OCI-LY7 (cell line): ENCODE measurements at regions of chr1 and their contacts with region 1.

Region 1: DNA sequence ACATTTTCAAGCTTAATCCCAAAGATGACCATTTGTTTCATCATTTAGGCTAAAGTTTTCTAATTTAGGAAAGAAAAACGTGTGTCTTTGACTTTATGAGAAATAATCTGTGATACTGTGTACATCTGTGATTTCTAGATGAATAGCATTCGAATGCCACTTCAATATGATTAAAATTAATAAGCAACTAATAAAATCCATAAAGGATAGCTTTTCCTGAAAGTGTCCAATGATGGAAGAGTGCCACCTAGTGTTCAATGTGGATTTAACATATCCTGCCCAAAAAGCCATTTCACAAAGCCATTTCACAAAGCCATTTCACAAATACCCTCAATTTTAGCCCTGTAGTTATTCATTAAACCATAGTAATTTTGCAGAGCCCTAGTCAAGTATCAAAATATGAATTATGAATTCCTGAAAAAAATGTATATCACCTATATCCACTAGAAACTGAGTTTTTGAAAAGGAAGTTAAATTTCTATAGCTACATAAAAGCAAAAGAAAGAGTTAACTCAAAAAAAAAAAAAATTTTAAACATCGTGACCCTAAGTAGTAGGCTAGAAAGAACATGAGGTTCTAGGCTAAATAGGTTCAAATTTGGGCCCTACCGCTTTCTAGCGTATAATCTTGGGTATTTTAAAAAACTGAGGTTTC is 19.1 kb downstream of the NME7 start:
- DNase-seq: peak; percentile 66
- H3K4me3 ChIP-seq: no peak overlapping the region
- H3K27ac ChIP-seq: no peak overlapping the region
- H3K4me1 ChIP-seq: no peaks in the 10 kb centered on the region
- CTCF ChIP-seq: peak; percentile 96

Region 2: GRCh38 chr1:168342572-168343280 is 1005.8 kb before region 1 on chr1:
- CTCF ChIA-PET with region 1: no interaction called
- POLR2A ChIA-PET with region 1: interaction called, 3 read pairs
- intact Hi-C with region 1: loop called (anchors 10 kb)
- DNase-seq: peak; percentile 72
- H3K4me3 ChIP-seq: no peak overlapping the region
- H3K27ac ChIP-seq: no peak overlapping the region
- H3K4me1 ChIP-seq: no peaks in the 10 kb centered on the region
- CTCF ChIP-seq: peak; percentile 72

Region 3: GRCh38 chr1:168603501-168604110 is 744.9 kb before region 1 on chr1:
- CTCF ChIA-PET with region 1: interaction called, 3 read pairs
- POLR2A ChIA-PET with region 1: no interaction called
- intact Hi-C with region 1: loop called (anchors 2 kb)
- DNase-seq: peak; percentile 60
- H3K4me3 ChIP-seq: no peak overlapping the region
- H3K27ac ChIP-seq: no peak overlapping the region
- H3K4me1 ChIP-seq: no peaks in the 10 kb centered on the region
- CTCF ChIP-seq: peak; percentile 85

Region 4: DNA sequence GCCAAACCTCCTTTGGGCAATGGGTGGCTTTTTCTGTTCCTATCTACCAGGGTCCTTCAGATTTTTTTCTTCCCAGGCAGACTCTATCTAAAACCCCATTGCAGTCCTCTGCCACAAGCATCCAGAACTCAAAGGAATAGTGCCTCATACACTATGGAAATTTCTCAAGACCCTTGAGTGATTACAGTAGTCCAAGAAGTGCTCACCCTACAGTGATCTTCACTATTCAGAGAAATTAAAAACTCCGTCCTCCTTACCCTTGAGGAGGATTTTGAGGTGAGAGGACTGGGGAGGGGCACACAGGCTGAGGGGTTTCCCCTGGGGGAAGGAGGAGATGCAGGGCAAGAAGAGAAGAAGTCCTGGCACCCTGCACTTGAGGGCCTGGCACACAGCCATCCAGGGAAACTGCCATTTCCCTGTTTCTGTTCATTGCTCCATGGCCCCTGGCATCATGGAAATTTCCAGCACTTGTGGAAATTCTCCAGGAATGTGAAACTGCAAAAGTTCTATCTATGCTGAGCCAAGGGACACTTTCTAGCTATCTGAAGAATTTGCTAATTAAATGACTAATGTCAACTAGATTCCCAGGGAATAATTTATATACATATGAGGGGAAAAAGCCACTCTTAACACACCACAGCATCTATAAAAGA is 344.5 kb before region 1 on chr1:
- CTCF ChIA-PET with region 1: no interaction called
- POLR2A ChIA-PET with region 1: no interaction called
- intact Hi-C with region 1: loop called (anchors 10 kb)
- DNase-seq: no peak
- H3K4me3 ChIP-seq: no peak overlapping the region
- H3K27ac ChIP-seq: no peak overlapping the region
- H3K4me1 ChIP-seq: no peaks in the 10 kb centered on the region
- CTCF ChIP-seq: no peak